A673 (cell line): ENCODE measurements at regions of chr1 and their contacts with region 1.

Region 1: DNA sequence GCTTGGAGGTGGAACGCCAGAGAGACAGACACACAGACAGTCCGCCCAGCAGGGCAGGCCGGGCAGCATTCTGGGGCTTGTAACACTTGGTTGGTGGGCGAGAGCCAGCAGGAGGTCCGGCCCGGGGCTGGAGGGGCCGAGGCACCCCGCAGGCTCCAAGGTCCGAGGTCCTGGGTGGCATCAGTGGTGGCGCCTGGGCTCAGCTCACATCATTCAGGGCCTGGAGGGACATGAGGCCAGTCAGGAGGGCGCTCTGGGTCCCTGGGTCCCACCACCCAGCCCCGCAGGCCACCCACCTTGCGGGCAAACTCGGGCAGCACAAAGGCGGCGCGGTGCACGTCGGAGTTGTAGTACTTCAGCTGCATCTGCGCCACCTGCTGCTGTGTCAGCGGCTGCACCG is 5.2 kb downstream of the SRM start:
- DNase-seq: no peak
- H3K4me3 ChIP-seq: no peak overlapping the region
- H3K27ac ChIP-seq: no peak overlapping the region
- H3K4me1 ChIP-seq: peaks cover 4% of the 10 kb centered on the region
- H3K27me3 ChIP-seq: no peaks in the 10 kb centered on the region
- CTCF ChIP-seq: no peak

Region 2: GRCh38 chr1:10209905-10210810 is 844.5 kb before region 1 on chr1 and contains the start of gene KIF1B:
- CTCF ChIA-PET with region 1: no interaction called
- POLR2A ChIA-PET with region 1: no interaction called
- intact Hi-C with region 1: no loop called
- DNase-seq: peak; percentile 99
- H3K4me3 ChIP-seq: peak within 1 kb of the TSS; percentile 90
- H3K27ac ChIP-seq: peak within 1 kb of the TSS; percentile 90
- H3K4me1 ChIP-seq: peaks cover 16% of the 10 kb centered on the region
- H3K27me3 ChIP-seq: no peaks in the 10 kb centered on the region
- CTCF ChIP-seq: peak; percentile 99
- total RNA-seq, gene KIF1B: 69.5 and 71.7 TPM in 2 replicates

Region 3: GRCh38 chr1:10598389-10598702 is 456.3 kb before region 1 on chr1:
- CTCF ChIA-PET with region 1: no interaction called
- POLR2A ChIA-PET with region 1: no interaction called
- intact Hi-C with region 1: no loop called
- DNase-seq: peak; percentile 46
- H3K4me3 ChIP-seq: no peak overlapping the region
- H3K27ac ChIP-seq: no peak overlapping the region
- H3K4me1 ChIP-seq: peaks cover 10% of the 10 kb centered on the region
- H3K27me3 ChIP-seq: no peaks in the 10 kb centered on the region
- CTCF ChIP-seq: peak; percentile 50

Region 4: DNA sequence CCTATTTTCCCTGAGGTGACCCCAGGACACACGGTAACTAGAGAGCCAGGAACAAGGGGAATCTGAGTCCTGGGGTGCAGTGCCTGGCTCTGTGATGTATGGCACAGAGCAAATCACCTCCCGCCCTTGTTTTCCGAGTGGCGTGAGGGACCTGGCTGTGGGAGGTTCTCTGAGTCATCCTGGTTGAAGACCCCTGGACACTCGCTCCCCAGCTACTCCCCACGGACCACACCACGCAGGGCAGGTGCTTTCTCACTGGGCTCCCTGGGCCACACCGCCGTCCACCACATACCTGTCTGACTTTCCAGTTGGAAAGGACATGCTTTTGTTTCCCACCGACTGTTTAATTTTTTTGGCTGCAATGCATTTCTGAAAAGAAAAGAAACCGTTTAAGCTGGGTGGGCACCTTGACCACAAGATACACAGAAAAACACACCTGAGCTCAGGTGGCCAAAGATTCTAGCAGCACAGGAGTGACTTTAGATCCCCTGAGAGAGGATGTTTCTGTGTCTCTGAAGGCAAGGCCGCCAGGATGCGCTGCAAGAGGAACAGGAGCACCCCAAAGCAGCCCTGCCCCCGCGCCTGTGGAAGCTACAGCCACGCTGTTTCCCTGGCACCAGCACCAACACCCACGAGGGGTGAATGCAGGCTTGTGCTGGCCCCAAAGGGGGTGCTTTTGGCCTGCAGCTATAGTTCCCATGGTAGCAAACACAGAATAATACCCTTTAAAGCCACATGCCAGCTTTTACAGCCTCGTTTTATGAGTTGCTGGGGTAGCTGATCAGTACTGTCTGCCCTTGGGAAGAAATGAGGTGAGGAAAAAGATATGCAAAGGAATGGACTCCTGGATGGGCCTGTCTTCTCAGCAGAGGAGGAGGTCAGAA is 13.3 kb after region 1 on chr1:
- CTCF ChIA-PET with region 1: interaction called, 10 read pairs
- POLR2A ChIA-PET with region 1: no interaction called
- intact Hi-C with region 1: no loop called
- DNase-seq: no peak
- H3K4me3 ChIP-seq: no peak overlapping the region
- H3K27ac ChIP-seq: no peak overlapping the region
- H3K4me1 ChIP-seq: no peaks in the 10 kb centered on the region
- H3K27me3 ChIP-seq: no peaks in the 10 kb centered on the region
- CTCF ChIP-seq: no peak